ENCODE measurements at regions of chr7 and their contacts with region 1.

Region 1: GRCh38 chr7:137934941-137935883 is 66.7 kb downstream of the CREB3L2 start:
- DNase-seq: no peak
- H3K4me3 Mint-ChIP-seq: peak overlapping the region; percentile 89
- H3K27ac Mint-ChIP-seq: peak overlapping the region; percentile 93
- H3K4me1 Mint-ChIP-seq: peaks cover 42% of the 10 kb centered on the region
- H3K27me3 Mint-ChIP-seq: no peaks in the 10 kb centered on the region

Region 2: DNA sequence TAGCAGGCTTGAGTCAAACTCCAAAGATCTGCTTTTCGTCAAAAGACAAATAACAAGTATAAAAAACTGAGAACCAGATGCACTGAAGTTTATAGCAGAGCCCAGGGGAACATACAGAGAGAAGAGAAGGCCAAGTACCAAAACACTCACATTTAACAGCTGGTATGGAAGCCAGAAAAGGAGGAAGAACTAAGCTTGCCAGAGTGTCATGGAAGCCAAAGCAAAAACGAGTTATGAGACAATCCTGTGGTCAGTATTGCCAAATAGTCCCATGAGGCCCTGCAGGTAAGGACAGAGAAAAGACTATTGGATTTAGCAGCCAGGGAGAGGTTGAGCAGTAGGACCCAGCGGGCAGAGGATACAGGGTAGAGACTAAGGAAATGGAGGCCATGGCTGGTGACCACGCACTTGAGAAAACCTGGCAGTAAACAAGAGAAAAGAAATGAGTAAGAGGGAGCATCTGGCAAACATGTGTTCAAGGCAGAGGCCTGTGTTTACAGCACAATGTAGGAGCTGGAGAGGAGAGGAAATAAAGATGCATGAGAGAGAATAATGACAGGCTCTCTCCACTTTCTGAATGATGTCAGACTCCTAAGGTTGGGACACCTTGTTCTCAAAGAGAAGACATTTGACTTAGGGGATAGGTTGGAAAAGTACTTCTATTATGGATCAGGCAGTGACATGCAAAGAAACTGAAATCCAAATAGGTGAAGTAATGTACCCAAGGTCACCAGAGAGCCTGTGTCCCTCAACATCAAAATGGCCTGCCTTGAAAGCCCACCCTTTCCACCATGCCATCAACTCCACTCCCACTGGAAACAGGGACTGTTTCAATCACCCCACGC is 57.6 kb after region 1 on chr7:
- intact Hi-C with region 1: loop called (anchors 2 kb)
- DNase-seq: peak; percentile 74
- H3K4me3 Mint-ChIP-seq: peak overlapping the region; percentile 24
- H3K27ac Mint-ChIP-seq: peak overlapping the region; percentile 82
- H3K4me1 Mint-ChIP-seq: peaks cover 35% of the 10 kb centered on the region
- H3K27me3 Mint-ChIP-seq: no peaks in the 10 kb centered on the region

Region 3: GRCh38 chr7:138352570-138353461 is 417.6 kb after region 1 on chr7:
- intact Hi-C with region 1: no loop called
- DNase-seq: no peak
- H3K4me3 Mint-ChIP-seq: no peak overlapping the region
- H3K27ac Mint-ChIP-seq: no peak overlapping the region
- H3K4me1 Mint-ChIP-seq: no peaks in the 10 kb centered on the region
- H3K27me3 Mint-ChIP-seq: no peaks in the 10 kb centered on the region

Measured in activated CD4-positive, alpha-beta T cell treated with anti-CD3 and anti-CD28 coated beads, Interleukin-2, amount 10 ng/mL, durations not matched to agents 24 days and 14 days (primary cell).